ENCODE measurements at regions of chr1 and their contacts with region 1.

Region 1: DNA sequence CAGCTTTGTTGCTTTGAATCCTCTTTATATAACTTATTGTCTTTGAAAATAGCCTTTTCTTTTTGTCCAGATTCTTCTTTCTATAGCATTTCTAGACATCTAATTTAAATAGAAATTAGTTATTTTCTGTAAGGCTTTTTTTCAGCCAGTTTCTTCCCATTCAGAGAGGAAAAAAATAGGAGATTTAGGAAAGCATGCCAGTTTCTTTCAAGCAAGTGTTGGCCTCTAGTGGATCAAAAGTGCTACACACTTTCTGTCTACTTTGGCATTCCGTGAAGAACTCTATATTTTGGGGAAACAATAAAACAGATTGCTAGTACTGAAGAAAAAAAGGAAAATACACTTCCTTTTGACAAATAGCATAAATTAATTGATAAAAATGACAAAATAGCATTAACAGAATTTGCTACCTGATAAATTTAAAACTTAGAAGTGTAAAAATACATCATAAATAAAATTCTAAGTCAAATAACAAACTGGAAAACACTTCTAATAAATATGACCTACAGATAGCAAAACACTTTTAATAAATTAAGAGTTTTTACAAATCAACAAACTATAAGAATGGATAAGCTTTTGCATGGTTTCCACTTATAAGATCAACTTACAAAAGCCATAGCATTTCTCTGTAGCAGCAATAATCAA is 13.1 kb upstream of the EXO1 start:
- DNase-seq: peak; percentile 39

Region 2: GRCh38 chr1:241611063-241611462 is 223.8 kb before region 1 on chr1:
- in situ Hi-C with region 1: loop called (anchors 10 kb)
- DNase-seq: peak; percentile 80

Measured in Caki2 (cell line).